ENCODE measurements at regions of chr7 and their contacts with region 1.

Region 1: DNA sequence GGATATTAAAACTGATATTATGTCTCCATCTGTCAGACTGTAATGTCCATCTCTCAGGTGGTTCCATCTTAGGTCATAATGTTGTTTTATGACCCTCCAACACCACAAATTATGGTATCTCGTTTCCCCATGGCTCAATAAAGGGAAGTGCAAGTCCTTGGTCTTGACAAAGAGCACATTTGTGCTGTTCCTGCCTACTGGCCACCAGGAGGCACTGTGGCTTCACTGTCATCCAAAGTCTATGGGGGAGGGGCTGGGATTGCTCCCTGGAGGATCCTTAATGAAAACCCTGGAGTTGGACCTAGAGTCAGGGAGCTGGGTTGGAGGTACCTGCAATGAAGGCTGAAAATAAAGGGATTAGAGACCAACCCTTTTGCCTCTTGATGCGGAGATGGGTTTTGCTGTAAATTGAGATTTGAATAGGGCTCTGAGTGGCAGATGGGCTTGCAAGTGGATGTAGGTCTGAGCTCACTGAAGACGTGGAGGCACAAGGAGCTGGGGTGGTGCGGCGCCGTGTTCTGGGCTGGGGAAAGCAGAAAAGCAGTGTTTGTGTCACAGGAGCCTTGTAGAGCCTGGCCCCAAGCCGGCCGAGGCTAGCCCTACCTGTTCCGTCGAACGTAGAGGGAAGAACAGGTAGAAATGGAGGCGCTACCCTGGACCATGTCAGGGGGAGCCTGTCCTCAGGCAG is 180.5 kb upstream of the PRSS58 start:
- DNase-seq: no peak
- H3K4me3 Mint-ChIP-seq: no peak overlapping the region
- H3K27ac Mint-ChIP-seq: peak overlapping the region; percentile 4
- H3K4me1 Mint-ChIP-seq: peaks cover 55% of the 10 kb centered on the region
- H3K27me3 Mint-ChIP-seq: no peaks in the 10 kb centered on the region

Region 2: DNA sequence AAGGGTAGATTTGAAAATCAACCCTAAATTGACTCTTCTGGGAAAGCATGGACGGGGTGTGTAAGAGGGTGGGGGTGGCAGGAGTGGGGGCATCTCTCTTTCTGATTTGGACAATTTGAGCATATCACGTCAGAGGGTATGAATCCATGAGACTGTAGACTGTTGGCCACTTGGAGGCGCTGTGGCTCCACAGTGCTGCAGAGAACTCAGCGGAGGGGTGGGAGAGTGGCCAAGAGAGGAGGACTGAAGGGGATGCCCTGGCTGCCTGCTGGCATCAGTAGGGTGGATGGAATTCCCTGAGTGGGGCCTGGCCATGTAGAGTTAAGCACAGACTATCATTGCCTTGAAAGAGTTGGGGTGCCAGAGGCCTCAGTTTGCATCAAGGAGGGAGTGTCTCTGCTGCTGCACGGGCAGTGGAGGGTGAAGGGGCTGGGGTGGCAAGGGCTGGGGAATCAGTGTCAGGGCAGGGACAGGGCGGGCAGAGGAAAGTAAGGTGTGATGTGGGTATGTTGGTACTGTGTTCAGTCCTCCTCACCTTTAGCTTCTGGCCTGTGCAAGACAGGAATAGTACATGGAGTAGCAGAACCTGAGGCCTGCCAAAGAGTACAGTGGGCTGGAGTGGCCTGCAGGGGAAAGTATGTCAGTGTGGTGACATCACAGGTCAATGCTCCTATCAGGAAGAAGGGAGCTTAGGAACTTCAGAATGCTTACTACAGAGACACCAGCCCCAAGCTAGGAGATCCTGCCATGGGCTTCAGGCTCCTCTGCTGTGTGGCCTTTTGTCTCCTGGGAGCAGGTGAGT is 47.0 kb before region 1 on chr7:
- intact Hi-C with region 1: loop called (anchors 5 kb)
- DNase-seq: no peak
- H3K4me3 Mint-ChIP-seq: peak overlapping the region; percentile 61
- H3K27ac Mint-ChIP-seq: peak overlapping the region; percentile 40
- H3K4me1 Mint-ChIP-seq: no peaks in the 10 kb centered on the region
- H3K27me3 Mint-ChIP-seq: peaks cover 3% of the 10 kb centered on the region

Measured in activated T-helper 1 cell treated with anti-CD3 and anti-CD28 coated beads, Interleukin-12 subunit alpha, Interleukin-12 subunit beta, Interleukin-2, Interleukin-4 antibody, amounts not matched to agents 30 ng/mL and 10 ng/mL and 1 ng/mL, durations not matched to agents 14 hours and 24 hours and 36 hours (primary cell).